Heart left ventricle (tissue), 16 donors: ENCODE measurements at regions of chr2 and their contacts with region 1.

Region 1: GRCh38 chr2:44955593-44956392 is 14.3 kb downstream of the SIX3 start:
- DNase-seq: peak; percentile 63 to 88 (median 72)
- ATAC-seq: peak; percentile 74 to 88 (median 82)
- H3K4me3 ChIP-seq: peak overlapping the region; percentile 0 to 47 (median 31)
- H3K27ac ChIP-seq: no peak overlapping the region
- H3K4me1 ChIP-seq: peaks cover 0 to 35% (median 28%) of the 10 kb centered on the region in 12 donors
- H3K27me3 ChIP-seq: peaks cover 27 to 86% (median 59%) of the 10 kb centered on the region in 9 donors
- CTCF ChIP-seq: peak; percentile 76 to 94 (median 88)
- POLR2A ChIP-seq: no peak

Region 2: DNA sequence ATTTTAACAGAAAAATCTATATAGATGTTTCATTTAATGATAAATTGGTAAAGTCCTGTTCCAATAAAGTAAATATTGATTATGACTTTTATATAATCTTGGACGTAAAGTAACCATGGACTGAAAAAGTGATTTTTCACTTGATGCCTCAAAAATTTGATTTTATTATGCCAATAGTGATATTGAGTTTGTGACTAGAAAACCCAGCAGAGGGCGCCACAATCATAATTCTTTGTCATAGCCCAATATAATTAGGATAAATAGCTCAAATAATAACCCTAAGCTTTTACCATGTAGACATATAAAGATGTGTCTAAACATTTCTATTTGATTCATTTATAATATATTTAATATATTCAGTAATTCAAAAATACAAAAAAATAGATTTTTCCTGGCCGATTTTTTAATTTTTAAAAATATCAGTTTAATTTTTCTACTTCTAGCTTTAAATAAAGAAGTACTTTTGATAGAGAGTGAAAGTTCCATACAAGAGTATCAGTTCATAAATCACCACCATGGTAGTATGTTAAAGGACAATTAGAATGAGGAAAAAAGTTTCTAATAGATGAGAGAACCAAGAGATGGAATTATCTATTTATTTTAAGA is 563.4 kb before region 1 on chr2:
- intact Hi-C with region 1: loop called (anchors 1 to 10 kb)
- DNase-seq: peak in 3 of 5 donors; percentile 16 to 40 (median 36)
- ATAC-seq: no peak
- H3K4me3 ChIP-seq: no peak overlapping the region
- H3K27ac ChIP-seq: no peak overlapping the region
- H3K4me1 ChIP-seq: no peaks in the 10 kb centered on the region
- H3K27me3 ChIP-seq: no peaks in the 10 kb centered on the region
- CTCF ChIP-seq: peak in 11 of 12 donors; percentile 43 to 75 (median 58)
- POLR2A ChIP-seq: no peak

Region 3: DNA sequence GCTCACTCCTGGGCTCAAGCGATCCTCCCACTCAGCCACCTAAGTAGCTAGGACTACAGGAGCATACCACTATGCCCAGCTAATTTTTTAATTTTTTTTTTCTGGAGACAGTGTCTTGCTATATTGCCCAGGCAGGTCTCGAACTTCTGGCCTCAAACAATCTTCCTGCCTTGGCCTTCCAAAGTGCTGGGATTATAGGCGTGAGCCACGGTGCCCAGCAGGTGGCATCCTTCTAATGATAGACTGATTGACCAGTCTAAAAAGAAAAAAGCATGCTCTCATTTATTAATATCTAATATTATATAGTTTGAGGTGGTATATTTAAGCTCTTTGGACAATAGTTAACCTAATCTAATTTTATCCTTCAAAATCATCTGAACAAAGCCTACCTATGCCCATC is 395.4 kb before region 1 on chr2:
- intact Hi-C with region 1: loop called in 2 of 10 experiments (anchors 10 kb)
- DNase-seq: peak in 1 of 5 donors; percentile 29
- ATAC-seq: no peak
- H3K4me3 ChIP-seq: no peak overlapping the region
- H3K27ac ChIP-seq: no peak overlapping the region
- H3K4me1 ChIP-seq: no peaks in the 10 kb centered on the region
- H3K27me3 ChIP-seq: no peaks in the 10 kb centered on the region
- CTCF ChIP-seq: peak in 11 of 12 donors; percentile 9 to 49 (median 26)
- POLR2A ChIP-seq: no peak

Region 4: GRCh38 chr2:45000921-45001868 is 45.4 kb after region 1 on chr2:
- intact Hi-C with region 1: no loop called
- DNase-seq: peak in 1 of 5 donors; percentile 34
- ATAC-seq: peak in 3 of 4 donors; percentile 33 to 38 (median 38)
- H3K4me3 ChIP-seq: peak overlapping the region in 11 of 12 donors; percentile 2 to 44 (median 37)
- H3K27ac ChIP-seq: peak overlapping the region in 2 of 12 donors; percentile 14 to 41
- H3K4me1 ChIP-seq: peaks cover 0 to 44% (median 21%) of the 10 kb centered on the region in 12 donors
- H3K27me3 ChIP-seq: peaks cover 56 to 100% (median 90%) of the 10 kb centered on the region in 9 donors
- CTCF ChIP-seq: no peak
- POLR2A ChIP-seq: no peak

Region 5: GRCh38 chr2:45014016-45014702 is 58.4 kb after region 1 on chr2:
- intact Hi-C with region 1: no loop called
- DNase-seq: peak; percentile 42 to 76 (median 53)
- ATAC-seq: peak in 3 of 4 donors; percentile 19 to 62 (median 27)
- H3K4me3 ChIP-seq: peak overlapping the region; percentile 27 to 61 (median 48)
- H3K27ac ChIP-seq: peak overlapping the region in 5 of 12 donors; percentile 17 to 56 (median 38)
- H3K4me1 ChIP-seq: peaks cover 0 to 40% (median 23%) of the 10 kb centered on the region in 12 donors
- H3K27me3 ChIP-seq: peaks cover 30 to 80% (median 48%) of the 10 kb centered on the region in 9 donors
- CTCF ChIP-seq: peak; percentile 59 to 81 (median 66)
- POLR2A ChIP-seq: no peak